Right cardiac atrium (tissue), 5 donors: ENCODE measurements at regions of chr2 and their contacts with region 1.

Region 1: GRCh38 chr2:25951071-25951547 is 31.2 kb downstream of the KIF3C start:
- DNase-seq: peak; percentile 74 to 89 (median 77)
- ATAC-seq: peak; percentile 92 to 93
- H3K4me3 ChIP-seq: no peak overlapping the region
- H3K27ac ChIP-seq: no peak overlapping the region
- H3K4me1 ChIP-seq: no peaks in the 10 kb centered on the region
- H3K27me3 ChIP-seq: no peaks in the 10 kb centered on the region

Region 2: DNA sequence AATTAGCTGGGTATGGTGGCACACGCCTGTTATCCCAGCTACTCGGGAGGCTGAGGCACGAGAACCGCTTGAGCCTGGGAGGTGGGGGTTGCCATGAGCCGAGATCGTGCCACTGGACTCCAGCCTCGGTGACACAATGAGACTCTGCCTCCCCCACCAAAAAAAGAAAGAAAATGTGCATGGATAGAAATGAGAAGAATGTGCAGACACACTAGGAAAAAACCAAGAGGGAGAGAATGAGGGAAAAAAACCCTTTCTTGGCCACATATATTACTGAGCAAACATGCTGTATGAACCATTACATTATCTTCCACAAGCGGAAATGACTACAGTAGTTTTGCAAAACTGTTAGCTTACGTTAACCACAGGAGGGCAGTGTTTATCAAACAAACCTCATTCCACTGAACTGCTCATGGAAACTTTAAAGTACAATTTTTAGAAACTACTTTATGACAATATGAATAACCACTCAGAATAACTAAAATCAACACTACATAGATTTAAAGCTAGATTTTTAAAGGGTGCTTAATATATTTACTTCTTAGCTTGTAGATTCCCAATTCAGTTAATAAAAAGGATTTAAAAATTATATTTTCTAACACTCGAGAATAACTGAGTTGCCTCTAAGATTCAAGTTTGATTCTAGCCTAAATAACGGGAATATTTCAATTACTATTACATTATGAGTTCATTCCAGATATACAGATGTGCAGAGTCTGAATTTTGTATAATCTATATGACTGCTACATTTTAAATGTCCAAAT is 99.2 kb before region 1 on chr2:
- intact Hi-C with region 1: loop called in 1 of 4 experiments (anchors 10 kb)
- DNase-seq: no peak
- ATAC-seq: peak; percentile 85 to 91
- H3K4me3 ChIP-seq: no peak overlapping the region
- H3K27ac ChIP-seq: peak overlapping the region; percentile 19
- H3K4me1 ChIP-seq: peaks cover 11% of the 10 kb centered on the region
- H3K27me3 ChIP-seq: no peaks in the 10 kb centered on the region

Region 3: GRCh38 chr2:26330113-26330549 is 379.0 kb after region 1 on chr2:
- intact Hi-C with region 1: loop called in 1 of 4 experiments (anchors 5 kb)
- DNase-seq: peak; percentile 86 to 95 (median 93)
- ATAC-seq: peak; percentile 86 to 94
- H3K4me3 ChIP-seq: no peak overlapping the region
- H3K27ac ChIP-seq: no peak overlapping the region
- H3K4me1 ChIP-seq: no peaks in the 10 kb centered on the region
- H3K27me3 ChIP-seq: no peaks in the 10 kb centered on the region